Activated CD4-positive, alpha-beta memory T cell treated with anti-CD3 and anti-CD28 coated beads, Interleukin-2, amount 10 ng/mL, durations not matched to agents 7 days and 5 days (primary cell): ENCODE measurements at regions of chr12 and their contacts with region 1.

Region 1: GRCh38 chr12:57309420-57309819 is 58.4 kb upstream of the STAC3 start:
- DNase-seq: no peak
- H3K4me3 Mint-ChIP-seq: no peak overlapping the region
- H3K27ac Mint-ChIP-seq: no peak overlapping the region
- H3K4me1 Mint-ChIP-seq: peaks cover 10% of the 10 kb centered on the region
- H3K27me3 Mint-ChIP-seq: no peaks in the 10 kb centered on the region

Region 2: GRCh38 chr12:57430931-57431720 is 121.7 kb after region 1 on chr12 and contains the start of gene R3HDM2:
- CTCF ChIA-PET with region 1: interaction called, 12 read pairs
- POLR2A ChIA-PET with region 1: no interaction called
- DNase-seq: peak; percentile 96
- H3K4me3 Mint-ChIP-seq: peak within 1 kb of the TSS; percentile 99
- H3K27ac Mint-ChIP-seq: peak within 1 kb of the TSS; percentile 99
- H3K4me1 Mint-ChIP-seq: peaks cover 43% of the 10 kb centered on the region
- H3K27me3 Mint-ChIP-seq: no peaks in the 10 kb centered on the region
- total RNA-seq, gene R3HDM2: 70.2 to 71.5 TPM